ENCODE measurements at regions of chr7 and their contacts with region 1.

Region 1: GRCh38 chr7:141785706-141786552 is 4.1 kb upstream of the TAS2R5 start:
- DNase-seq: peak; percentile 71
- H3K4me3 ChIP-seq: no peak overlapping the region
- H3K27ac ChIP-seq: no peak overlapping the region
- H3K4me1 ChIP-seq: peaks cover 21% of the 10 kb centered on the region
- H3K27me3 ChIP-seq: no peaks in the 10 kb centered on the region
- CTCF ChIP-seq: peak; percentile 66 to 72
- POLR2A ChIP-seq: no peak

Region 2: DNA sequence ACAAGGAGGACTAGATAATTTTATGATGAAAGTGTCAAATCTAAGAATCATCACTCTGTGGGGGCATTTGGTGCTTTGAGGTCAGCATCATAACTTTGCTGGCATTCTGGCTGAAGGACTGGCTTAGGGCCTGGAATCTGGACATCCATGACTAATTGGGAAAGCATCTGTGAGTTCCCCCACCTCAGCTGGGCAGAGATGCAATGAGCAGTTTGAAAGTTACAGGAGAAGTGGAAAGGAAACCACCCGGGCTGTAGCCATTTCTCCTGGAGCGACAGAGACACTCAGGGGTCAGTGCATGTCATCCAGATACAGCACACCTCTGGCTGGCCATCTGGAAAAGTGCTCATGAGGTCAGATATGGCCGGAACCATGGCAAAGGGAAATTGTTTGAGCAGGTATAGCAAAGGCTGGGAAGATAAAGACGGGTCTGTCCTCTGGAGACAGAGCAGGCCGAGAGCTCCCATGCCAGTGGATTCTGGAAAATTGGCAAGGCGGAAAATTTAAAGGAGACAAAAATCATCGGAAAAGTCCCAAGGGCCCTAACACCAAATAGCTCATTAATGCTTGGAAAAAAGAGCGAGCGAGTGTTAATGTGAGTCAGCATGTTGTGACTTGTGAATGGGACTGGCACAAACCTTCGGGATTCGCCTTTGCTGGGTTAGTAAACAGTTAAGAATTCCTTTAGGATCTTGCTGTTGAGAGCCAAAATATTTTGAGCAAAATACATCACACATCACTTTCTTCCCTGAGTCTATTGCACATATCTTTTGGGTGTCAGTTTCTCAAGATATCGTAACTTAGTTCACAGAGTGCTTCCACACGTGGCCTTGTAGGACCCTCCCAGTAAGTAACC is 423.1 kb before region 1 on chr7:
- CTCF ChIA-PET with region 1: no interaction called
- POLR2A ChIA-PET with region 1: no interaction called
- dilution Hi-C with region 1: no loop called
- intact Hi-C with region 1: loop called (anchors 10 kb)
- DNase-seq: peak; percentile 73
- H3K4me3 ChIP-seq: no peak overlapping the region
- H3K27ac ChIP-seq: peak overlapping the region; percentile 93
- H3K4me1 ChIP-seq: peaks cover 36% of the 10 kb centered on the region
- H3K27me3 ChIP-seq: no peaks in the 10 kb centered on the region
- CTCF ChIP-seq: no peak
- POLR2A ChIP-seq: no peak

Region 3: GRCh38 chr7:141551094-141551781 is 234.7 kb before region 1 on chr7 and contains the start of gene AGK:
- CTCF ChIA-PET with region 1: no interaction called
- POLR2A ChIA-PET with region 1: no interaction called
- dilution Hi-C with region 1: no loop called
- intact Hi-C with region 1: loop called (anchors 5 kb)
- DNase-seq: peak; percentile 75
- H3K4me3 ChIP-seq: peak within 1 kb of the TSS; percentile 60 to 97 (median 82)
- H3K27ac ChIP-seq: peak within 1 kb of the TSS; percentile 38
- H3K4me1 ChIP-seq: peaks cover 13% of the 10 kb centered on the region
- H3K27me3 ChIP-seq: no peaks in the 10 kb centered on the region
- CTCF ChIP-seq: no peak
- POLR2A ChIP-seq: peak; percentile 79
- total RNA-seq, gene AGK: 33.9 and 34.3 TPM in 2 replicates

Region 4: GRCh38 chr7:141737834-141738591 is 47.9 kb before region 1 on chr7 and contains the start of gene SSBP1:
- CTCF ChIA-PET with region 1: interaction called, 35 read pairs
- POLR2A ChIA-PET with region 1: no interaction called
- dilution Hi-C with region 1: no loop called
- intact Hi-C with region 1: loop called (anchors 1 kb)
- DNase-seq: peak; percentile 99
- H3K4me3 ChIP-seq: peak within 1 kb of the TSS; percentile 74 to 99 (median 96)
- H3K27ac ChIP-seq: peak within 1 kb of the TSS; percentile 92
- H3K4me1 ChIP-seq: peaks cover 16% of the 10 kb centered on the region
- H3K27me3 ChIP-seq: no peaks in the 10 kb centered on the region
- CTCF ChIP-seq: peak; percentile 76 to 86
- POLR2A ChIP-seq: peak; percentile 89
- total RNA-seq, gene SSBP1: 164 and 169 TPM in 2 replicates

Region 5: DNA sequence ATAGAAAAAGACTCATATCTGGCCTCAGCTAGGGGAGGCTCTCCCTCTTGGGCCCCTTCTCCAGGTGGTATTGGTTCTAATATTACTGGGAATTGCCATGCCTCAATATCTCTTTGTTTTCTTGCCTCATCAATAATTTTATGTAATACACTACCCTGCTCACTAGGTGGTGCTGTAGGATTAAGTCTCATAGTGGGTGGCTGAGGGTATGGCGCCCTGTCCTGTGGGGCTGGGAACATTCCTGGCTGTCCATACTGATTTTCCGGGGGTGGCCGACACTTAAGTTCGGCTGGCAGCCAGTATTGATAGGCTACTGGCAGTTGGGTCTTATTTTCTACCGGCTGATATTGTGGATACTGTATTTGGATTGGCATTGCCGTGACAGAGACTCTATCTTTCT is 31.0 kb before region 1 on chr7:
- CTCF ChIA-PET with region 1: interaction called, 24 read pairs
- POLR2A ChIA-PET with region 1: no interaction called
- dilution Hi-C with region 1: no loop called
- intact Hi-C with region 1: loop called (anchors 1 kb)
- DNase-seq: peak; percentile 11
- H3K4me3 ChIP-seq: no peak overlapping the region
- H3K27ac ChIP-seq: no peak overlapping the region
- H3K4me1 ChIP-seq: no peaks in the 10 kb centered on the region
- H3K27me3 ChIP-seq: no peaks in the 10 kb centered on the region
- CTCF ChIP-seq: peak; percentile 20 to 22
- POLR2A ChIP-seq: no peak

Region 6: GRCh38 chr7:141763797-141764196 is 22.1 kb before region 1 on chr7 and contains the start of gene TAS2R3:
- CTCF ChIA-PET with region 1: interaction called, 24 read pairs
- POLR2A ChIA-PET with region 1: no interaction called
- dilution Hi-C with region 1: no loop called
- intact Hi-C with region 1: no loop called
- DNase-seq: no peak
- H3K4me3 ChIP-seq: no peak within 1 kb of the TSS
- H3K27ac ChIP-seq: no peak within 1 kb of the TSS
- H3K4me1 ChIP-seq: no peaks in the 10 kb centered on the region
- H3K27me3 ChIP-seq: no peaks in the 10 kb centered on the region
- CTCF ChIP-seq: no peak
- POLR2A ChIP-seq: no peak
- total RNA-seq, gene TAS2R3: 1.3 and 2.0 TPM in 2 replicates